Activated B cell treated with CpG ODN at 0.5 μM for 24 hours (primary cell): ENCODE measurements at regions of chr16 and their contacts with region 1.

Region 1: DNA sequence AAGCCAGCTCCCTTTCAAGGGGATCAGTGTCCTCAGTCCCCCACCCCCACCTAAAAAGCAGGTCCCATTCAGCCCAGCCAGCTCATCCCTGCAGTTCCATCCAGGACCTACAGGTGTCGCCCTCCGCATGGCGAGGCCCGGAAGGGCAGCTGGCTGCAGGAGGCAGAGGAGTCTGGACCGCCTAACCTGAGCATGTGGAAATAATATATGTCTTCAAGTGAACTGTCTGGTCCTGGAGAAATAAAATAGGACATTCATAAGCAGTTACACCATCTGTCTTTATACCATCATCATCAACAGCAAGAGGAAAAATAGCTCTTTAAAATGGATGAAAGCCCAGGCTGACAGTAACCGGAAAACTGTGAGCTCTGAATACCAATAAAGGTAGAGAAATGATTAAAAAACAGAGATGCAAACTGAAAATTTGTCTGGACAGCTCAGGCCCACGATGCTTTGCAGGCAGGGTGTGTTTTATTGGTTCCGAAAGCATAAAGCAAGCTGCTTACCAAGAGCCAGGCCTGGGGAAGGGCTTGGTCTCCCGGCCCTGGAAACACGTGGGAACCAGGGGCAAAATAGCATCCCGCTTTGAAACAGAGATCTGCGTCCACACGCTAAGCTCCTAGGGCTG is 215.2 kb downstream of the ZFHX3 start:
- DNase-seq: peak; percentile 71
- ATAC-seq: peak; percentile 83
- H3K4me3 Mint-ChIP-seq: no peak overlapping the region
- H3K27ac Mint-ChIP-seq: no peak overlapping the region
- H3K4me1 Mint-ChIP-seq: peaks cover 5% of the 10 kb centered on the region
- H3K27me3 Mint-ChIP-seq: no peaks in the 10 kb centered on the region
- CTCF ChIP-seq: peak; percentile 87

Region 2: DNA sequence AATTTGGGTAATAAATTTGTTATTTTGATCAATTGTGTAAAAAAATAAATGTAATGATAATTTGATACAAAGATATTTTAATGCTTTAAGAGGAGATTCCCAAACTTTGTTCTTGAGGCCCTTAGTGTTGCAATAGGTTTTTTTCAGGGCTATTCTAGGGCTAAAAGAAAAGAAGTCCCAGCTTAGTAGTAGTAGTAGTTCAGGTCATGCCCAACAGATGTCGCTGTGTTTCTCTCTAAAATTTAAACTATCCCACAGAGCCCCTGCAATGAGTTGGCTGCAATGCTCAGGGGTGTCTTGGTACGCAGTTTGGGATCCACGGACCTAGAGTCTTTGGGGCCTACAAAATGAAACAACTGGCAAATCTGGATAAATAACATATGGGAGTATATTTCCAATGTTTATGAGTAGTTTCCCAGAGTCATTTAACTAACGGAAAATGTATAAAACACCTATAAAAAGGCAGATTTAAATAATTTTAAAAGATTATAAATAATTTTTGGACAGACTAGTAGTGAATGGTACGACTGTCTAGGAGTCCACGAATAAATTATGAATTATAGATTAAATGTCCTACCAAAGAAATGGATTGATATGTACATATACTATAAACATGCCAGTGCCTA is 432.4 kb before region 1 on chr16:
- CTCF ChIA-PET with region 1: interaction called, 3 read pairs
- POLR2A ChIA-PET with region 1: no interaction called
- intact Hi-C with region 1: loop called (anchors 10 kb)
- DNase-seq: no peak
- ATAC-seq: peak; percentile 74
- H3K4me3 Mint-ChIP-seq: no peak overlapping the region
- H3K27ac Mint-ChIP-seq: no peak overlapping the region
- H3K4me1 Mint-ChIP-seq: peaks cover under 1% of the 10 kb centered on the region
- H3K27me3 Mint-ChIP-seq: no peaks in the 10 kb centered on the region
- CTCF ChIP-seq: no peak

Region 3: GRCh38 chr16:72818236-72818845 is 14.4 kb before region 1 on chr16:
- CTCF ChIA-PET with region 1: interaction called, 13 read pairs
- POLR2A ChIA-PET with region 1: no interaction called
- intact Hi-C with region 1: no loop called
- DNase-seq: no peak
- ATAC-seq: no peak
- H3K4me3 Mint-ChIP-seq: no peak overlapping the region
- H3K27ac Mint-ChIP-seq: no peak overlapping the region
- H3K4me1 Mint-ChIP-seq: no peaks in the 10 kb centered on the region
- H3K27me3 Mint-ChIP-seq: no peaks in the 10 kb centered on the region
- CTCF ChIP-seq: no peak

Region 4: GRCh38 chr16:73196670-73197069 is 363.9 kb after region 1 on chr16:
- CTCF ChIA-PET with region 1: interaction called, 19 read pairs
- POLR2A ChIA-PET with region 1: no interaction called
- intact Hi-C with region 1: loop called (anchors 1 kb)
- DNase-seq: no peak
- ATAC-seq: peak; percentile 37
- H3K4me3 Mint-ChIP-seq: no peak overlapping the region
- H3K27ac Mint-ChIP-seq: no peak overlapping the region
- H3K4me1 Mint-ChIP-seq: no peaks in the 10 kb centered on the region
- H3K27me3 Mint-ChIP-seq: peaks cover 2% of the 10 kb centered on the region
- CTCF ChIP-seq: no peak

Region 5: DNA sequence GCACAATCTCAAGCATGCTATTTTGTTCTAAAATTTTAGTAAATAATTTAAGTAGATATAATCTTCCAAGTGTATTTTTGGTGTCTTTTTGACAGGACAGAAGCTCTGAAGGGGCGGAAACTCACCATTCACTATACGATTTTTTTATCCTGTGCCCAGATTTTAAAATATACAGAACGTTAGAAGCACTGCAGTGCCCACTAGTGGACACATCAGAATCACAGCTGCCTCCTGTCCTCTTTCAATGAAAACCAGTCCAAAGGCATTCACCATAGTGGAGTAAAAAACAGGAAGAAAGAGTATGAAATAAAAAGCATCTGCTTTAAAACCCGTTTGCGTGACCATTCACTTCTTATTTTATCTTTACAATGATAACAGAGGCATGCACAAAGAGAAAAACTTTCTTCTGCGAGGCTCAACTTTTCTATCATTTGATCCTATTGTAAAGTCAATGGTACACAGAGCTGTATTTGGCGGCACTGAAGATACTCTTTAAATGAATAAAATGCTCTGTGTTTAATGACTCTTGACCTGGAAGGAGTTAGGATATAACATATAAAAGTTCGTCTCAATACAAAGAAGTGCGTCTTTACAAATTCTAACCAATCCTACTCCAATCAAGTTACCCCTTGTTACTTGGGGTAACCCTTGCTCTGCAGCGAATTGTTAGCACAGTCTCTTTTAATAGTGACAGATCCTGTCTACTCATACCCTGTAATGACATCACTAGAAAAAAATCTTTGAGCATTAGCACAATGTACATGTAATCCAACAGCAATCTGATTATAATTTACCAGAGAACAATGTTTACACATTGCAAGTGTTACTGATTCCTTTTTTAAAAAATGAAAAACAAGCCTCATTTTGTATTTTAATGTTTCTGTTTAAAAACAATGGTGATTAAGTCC is 1124.1 kb after region 1 on chr16:
- CTCF ChIA-PET with region 1: interaction called, 13 read pairs
- POLR2A ChIA-PET with region 1: no interaction called
- intact Hi-C with region 1: loop called (anchors 1 kb)
- DNase-seq: no peak
- ATAC-seq: no peak
- H3K4me3 Mint-ChIP-seq: no peak overlapping the region
- H3K27ac Mint-ChIP-seq: no peak overlapping the region
- H3K4me1 Mint-ChIP-seq: no peaks in the 10 kb centered on the region
- H3K27me3 Mint-ChIP-seq: no peaks in the 10 kb centered on the region
- CTCF ChIP-seq: peak; percentile 44